OCI-LY7 (cell line): ENCODE measurements at regions of chr11 and their contacts with region 1.

Region 1: GRCh38 chr11:105799728-105800462 is 190.0 kb downstream of the GRIA4 start:
- DNase-seq: no peak
- H3K4me3 ChIP-seq: no peak overlapping the region
- H3K27ac ChIP-seq: no peak overlapping the region
- H3K4me1 ChIP-seq: no peaks in the 10 kb centered on the region
- CTCF ChIP-seq: no peak

Region 2: GRCh38 chr11:105811242-105811641 is 11.3 kb after region 1 on chr11:
- CTCF ChIA-PET with region 1: no interaction called
- POLR2A ChIA-PET with region 1: interaction called, 10 read pairs
- intact Hi-C with region 1: no loop called
- DNase-seq: no peak
- H3K4me3 ChIP-seq: no peak overlapping the region
- H3K27ac ChIP-seq: no peak overlapping the region
- H3K4me1 ChIP-seq: no peaks in the 10 kb centered on the region
- CTCF ChIP-seq: no peak